ENCODE measurements at regions of chr1 and their contacts with region 1.

Region 1: GRCh38 chr1:188937965-188938551 is 1539.6 kb downstream of the BRINP3 start:
- DNase-seq: no peak
- H3K4me3 Mint-ChIP-seq: no peak overlapping the region
- H3K27ac Mint-ChIP-seq: no peak overlapping the region
- H3K4me1 Mint-ChIP-seq: no peaks in the 10 kb centered on the region
- H3K27me3 Mint-ChIP-seq: no peaks in the 10 kb centered on the region

Region 2: GRCh38 chr1:187051618-187052232 is 1886.3 kb before region 1 on chr1:
- intact Hi-C with region 1: loop called (anchors 5 kb)
- DNase-seq: peak; percentile 75
- H3K4me3 Mint-ChIP-seq: no peak overlapping the region
- H3K27ac Mint-ChIP-seq: no peak overlapping the region
- H3K4me1 Mint-ChIP-seq: no peaks in the 10 kb centered on the region
- H3K27me3 Mint-ChIP-seq: no peaks in the 10 kb centered on the region

Measured in activated CD4-positive, alpha-beta T cell treated with anti-CD3 and anti-CD28 coated beads, Interleukin-2, amount 10 ng/mL, durations not matched to agents 24 days and 14 days (primary cell).